Activated CD8-positive, alpha-beta T cell treated with anti-CD3 and anti-CD28 coated beads for 36 hours (primary cell): ENCODE measurements at regions of chr5 and their contacts with region 1.

Region 1: DNA sequence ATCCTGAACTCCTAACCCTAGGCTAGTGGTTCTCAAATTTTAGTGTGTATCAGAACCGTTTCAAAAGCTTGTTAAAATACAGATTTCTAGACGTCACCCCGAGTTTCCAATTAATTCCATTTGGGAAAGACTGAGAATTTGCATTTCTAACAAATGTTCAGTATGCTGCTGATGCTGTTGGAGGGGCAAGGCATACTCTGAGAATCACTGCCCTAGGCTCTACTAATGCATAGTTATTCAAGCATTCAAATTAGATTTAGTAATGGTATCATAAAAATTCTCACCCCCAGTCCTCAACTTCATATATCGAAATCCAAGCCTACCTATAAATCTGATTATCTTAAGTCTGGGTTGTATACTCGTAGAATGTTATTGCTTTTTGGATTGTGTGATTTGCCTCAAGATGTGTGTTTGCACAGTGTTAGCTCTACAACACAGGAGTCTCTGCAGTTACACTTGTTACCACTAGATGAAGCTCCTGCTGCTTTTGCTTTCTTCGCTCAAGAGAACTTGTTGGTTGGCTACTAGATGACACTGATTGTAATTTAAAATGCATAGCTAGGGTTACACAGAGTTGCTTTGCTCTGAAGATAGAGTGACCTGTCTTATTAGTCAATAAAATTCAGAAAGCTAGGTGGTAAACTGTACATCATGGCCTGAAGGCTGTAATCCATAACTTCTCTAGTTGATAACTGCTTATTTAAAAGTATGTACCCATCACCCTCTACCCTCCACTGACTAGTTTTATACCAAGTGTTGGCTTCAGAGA is 7.5 kb upstream of the ERAP2 start:
- DNase-seq: peak; percentile 34
- ATAC-seq: peak; percentile 88
- H3K4me3 Mint-ChIP-seq: no peak overlapping the region
- H3K27ac Mint-ChIP-seq: peak overlapping the region; percentile 87
- H3K4me1 Mint-ChIP-seq: peaks cover 44% of the 10 kb centered on the region
- H3K27me3 Mint-ChIP-seq: no peaks in the 10 kb centered on the region
- CTCF ChIP-seq: peak; percentile 87

Region 2: DNA sequence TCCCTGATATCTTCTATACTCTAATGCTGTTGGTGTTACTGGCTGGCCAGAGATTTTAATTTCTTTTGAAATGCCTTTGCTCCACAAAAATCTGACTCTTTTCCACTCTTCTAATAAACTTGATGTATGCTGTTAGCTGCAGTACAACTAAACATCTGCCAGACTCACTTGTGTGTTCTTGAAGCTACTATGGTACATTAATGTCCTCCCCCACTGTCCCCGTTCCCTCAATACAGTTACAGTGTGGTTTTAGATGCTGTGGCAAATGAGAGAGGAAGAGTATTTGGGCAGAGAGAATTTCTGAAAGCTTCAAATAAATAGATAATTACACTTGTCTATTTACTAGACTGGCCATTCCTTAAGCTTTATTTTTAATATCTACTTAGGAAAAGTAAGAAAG is 42.7 kb before region 1 on chr5:
- CTCF ChIA-PET with region 1: interaction called, 27 read pairs
- POLR2A ChIA-PET with region 1: no interaction called
- intact Hi-C with region 1: no loop called
- DNase-seq: no peak
- ATAC-seq: no peak
- H3K4me3 Mint-ChIP-seq: no peak overlapping the region
- H3K27ac Mint-ChIP-seq: no peak overlapping the region
- H3K4me1 Mint-ChIP-seq: peaks cover 34% of the 10 kb centered on the region
- H3K27me3 Mint-ChIP-seq: no peaks in the 10 kb centered on the region
- CTCF ChIP-seq: no peak

Region 3: DNA sequence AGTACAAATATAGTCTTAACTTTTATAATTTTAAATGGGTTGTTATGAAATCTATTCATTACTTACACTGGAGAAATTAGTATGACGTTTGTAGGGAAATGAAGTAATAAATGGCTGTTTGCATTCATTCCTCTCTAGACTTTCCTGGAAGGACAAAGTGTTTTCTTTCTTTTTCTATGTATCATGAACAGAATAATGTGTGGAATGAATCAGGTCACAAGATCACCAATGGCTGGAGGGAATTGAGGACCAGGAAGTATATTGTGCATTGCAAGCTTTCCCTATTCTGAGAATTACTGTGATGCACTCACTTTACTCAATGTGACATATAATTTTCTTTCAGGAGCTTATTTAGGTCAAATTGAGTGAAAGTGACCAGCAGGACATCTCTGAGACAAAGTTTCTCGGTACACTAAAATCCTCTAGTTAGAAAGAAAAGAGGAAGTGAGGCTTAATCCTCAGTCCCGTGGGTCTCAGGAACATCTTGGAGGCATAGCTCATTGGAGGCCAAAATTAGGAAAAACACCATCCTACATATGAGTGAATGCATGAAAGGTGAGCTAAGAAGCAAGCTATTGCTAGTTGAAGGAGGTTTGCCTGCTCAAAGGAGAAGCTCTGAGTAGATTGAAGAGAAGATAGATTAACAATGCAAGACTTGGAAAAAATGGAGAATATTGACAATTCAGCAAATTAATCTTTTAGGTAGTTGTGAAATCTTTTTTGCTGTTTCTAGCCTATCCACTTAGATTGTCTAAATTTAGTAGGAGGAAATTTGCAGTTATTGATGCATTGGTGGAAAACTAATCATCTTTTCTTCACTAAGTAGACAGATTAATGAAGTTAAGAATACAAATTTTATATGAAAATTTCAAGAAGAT is 35.5 kb after region 1 on chr5:
- CTCF ChIA-PET with region 1: interaction called, 47 read pairs
- POLR2A ChIA-PET with region 1: no interaction called
- intact Hi-C with region 1: no loop called
- DNase-seq: no peak
- ATAC-seq: no peak
- H3K4me3 Mint-ChIP-seq: no peak overlapping the region
- H3K27ac Mint-ChIP-seq: no peak overlapping the region
- H3K4me1 Mint-ChIP-seq: peaks cover 14% of the 10 kb centered on the region
- H3K27me3 Mint-ChIP-seq: no peaks in the 10 kb centered on the region
- CTCF ChIP-seq: no peak

Region 4: GRCh38 chr5:96961053-96961452 is 92.3 kb after region 1 on chr5:
- CTCF ChIA-PET with region 1: interaction called, 15 read pairs
- POLR2A ChIA-PET with region 1: no interaction called
- intact Hi-C with region 1: no loop called
- DNase-seq: no peak
- ATAC-seq: peak; percentile 24
- H3K4me3 Mint-ChIP-seq: peak overlapping the region; percentile 27
- H3K27ac Mint-ChIP-seq: peak overlapping the region; percentile 95
- H3K4me1 Mint-ChIP-seq: peaks cover 81% of the 10 kb centered on the region
- H3K27me3 Mint-ChIP-seq: no peaks in the 10 kb centered on the region
- CTCF ChIP-seq: no peak

Region 5: GRCh38 chr5:97009212-97009898 is 140.6 kb after region 1 on chr5:
- CTCF ChIA-PET with region 1: interaction called, 11 read pairs
- POLR2A ChIA-PET with region 1: no interaction called
- intact Hi-C with region 1: no loop called
- DNase-seq: no peak
- ATAC-seq: peak; percentile 71
- H3K4me3 Mint-ChIP-seq: no peak overlapping the region
- H3K27ac Mint-ChIP-seq: peak overlapping the region; percentile 77
- H3K4me1 Mint-ChIP-seq: peaks cover 30% of the 10 kb centered on the region
- H3K27me3 Mint-ChIP-seq: no peaks in the 10 kb centered on the region
- CTCF ChIP-seq: no peak